OCI-LY7 (cell line): ENCODE measurements at regions of chr2 and their contacts with region 1.

Region 1: DNA sequence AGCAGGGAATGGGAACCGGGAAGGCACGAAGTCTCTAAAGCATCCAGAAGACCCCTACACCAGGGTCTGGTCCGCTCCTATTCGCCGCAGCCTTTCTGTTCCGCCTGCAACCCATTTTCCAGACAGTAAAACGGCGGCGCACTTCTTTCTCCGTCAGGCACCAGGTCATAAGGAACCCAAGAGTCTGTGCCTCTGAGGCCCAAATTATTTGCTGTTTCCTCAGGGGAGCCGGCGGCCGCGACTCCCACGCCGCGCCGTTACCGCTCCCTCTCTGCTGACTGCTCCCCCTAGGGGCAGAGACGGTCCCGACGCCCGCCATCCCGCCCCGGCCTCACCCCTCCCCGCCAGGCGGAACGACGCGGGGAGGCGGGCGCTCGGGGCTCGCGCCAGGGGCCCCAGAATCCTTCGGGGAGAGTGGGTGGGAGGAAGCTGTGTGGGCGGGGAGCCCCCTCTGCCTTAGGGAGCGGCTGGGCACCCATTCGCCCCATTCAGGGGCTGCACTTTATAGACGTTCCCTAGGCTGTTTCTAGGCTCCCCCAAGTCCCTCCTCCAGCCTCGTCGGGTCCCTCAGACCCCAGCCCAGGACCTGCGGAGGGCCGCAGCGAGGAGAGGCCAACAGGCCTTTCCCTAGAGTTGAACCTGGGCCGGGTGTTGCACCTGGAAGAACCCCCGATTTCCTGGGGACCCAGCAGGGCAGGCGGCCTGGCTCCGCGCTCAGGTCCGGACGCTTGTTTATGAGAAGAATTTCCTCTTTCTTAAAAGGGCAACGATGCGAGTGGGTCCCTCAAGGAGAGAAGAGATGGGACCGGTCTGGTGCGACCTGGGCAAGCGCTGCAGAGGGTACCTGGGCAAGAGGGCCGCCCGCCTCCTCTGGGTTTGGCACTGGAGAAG is 3.6 kb upstream of the CTDSP1 start:
- DNase-seq: peak; percentile 98
- H3K4me3 ChIP-seq: peak overlapping the region; percentile 88
- H3K27ac ChIP-seq: peak overlapping the region; percentile 87
- H3K4me1 ChIP-seq: peaks cover 46% of the 10 kb centered on the region
- CTCF ChIP-seq: peak; percentile 89

Region 2: DNA sequence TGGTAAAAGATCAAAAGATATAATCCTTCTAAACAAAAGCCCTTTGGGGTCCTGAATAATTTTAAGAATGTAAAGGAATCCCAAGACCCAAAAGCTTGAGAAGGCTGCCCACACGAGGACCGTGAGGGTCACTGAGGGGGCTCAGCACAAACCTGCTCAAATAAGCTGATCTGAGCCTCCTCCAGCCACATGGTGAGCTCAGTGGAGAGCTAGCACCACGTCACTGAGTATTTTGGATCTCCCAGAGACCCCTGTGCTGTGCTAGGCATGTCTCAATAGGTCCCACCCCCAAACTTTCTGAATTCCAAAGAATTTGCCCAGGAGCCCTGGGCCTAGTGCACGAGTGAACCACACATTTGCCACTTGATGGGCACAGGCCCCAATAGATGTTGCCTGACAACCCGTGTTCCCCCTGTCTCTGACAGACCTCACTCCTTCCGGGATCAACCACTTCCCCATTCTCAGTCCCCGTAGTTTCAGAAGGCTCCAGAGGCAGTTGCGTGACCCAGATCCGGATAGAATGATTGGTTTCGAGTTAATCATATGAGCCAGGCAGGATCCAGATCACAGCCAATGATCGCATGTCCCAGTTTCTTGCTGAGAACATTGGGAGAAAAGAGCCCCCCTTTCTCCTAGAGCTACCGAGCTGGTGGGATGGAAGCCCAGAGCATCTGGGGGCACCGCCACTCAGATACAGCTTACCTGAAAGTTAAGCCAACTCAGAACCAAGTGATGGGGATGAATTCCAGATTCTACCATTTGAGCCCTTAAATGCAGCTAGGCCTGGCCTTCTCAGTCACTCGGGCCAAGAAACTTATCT is 597.1 kb before region 1 on chr2:
- CTCF ChIA-PET with region 1: no interaction called
- POLR2A ChIA-PET with region 1: no interaction called
- intact Hi-C with region 1: no loop called
- DNase-seq: peak; percentile 34
- H3K4me3 ChIP-seq: no peak overlapping the region
- H3K27ac ChIP-seq: no peak overlapping the region
- H3K4me1 ChIP-seq: peaks cover 10% of the 10 kb centered on the region
- CTCF ChIP-seq: no peak

Region 3: GRCh38 chr2:218216674-218217359 is 179.2 kb before region 1 on chr2 and contains the start of gene ARPC2:
- CTCF ChIA-PET with region 1: no interaction called
- POLR2A ChIA-PET with region 1: no interaction called
- intact Hi-C with region 1: loop called (anchors 2 kb)
- DNase-seq: peak; percentile 97
- H3K4me3 ChIP-seq: peak within 1 kb of the TSS; percentile 90
- H3K27ac ChIP-seq: peak within 1 kb of the TSS; percentile 92
- H3K4me1 ChIP-seq: peaks cover 32% of the 10 kb centered on the region
- CTCF ChIP-seq: no peak
- total RNA-seq, gene ARPC2: 257 and 264 TPM in 2 replicates

Region 4: GRCh38 chr2:218292048-218293014 is 103.7 kb before region 1 on chr2 and contains the start of gene TMBIM1:
- CTCF ChIA-PET with region 1: interaction called, 4 read pairs
- POLR2A ChIA-PET with region 1: interaction called, 10 read pairs
- intact Hi-C with region 1: loop called (anchors 1 kb)
- DNase-seq: peak; percentile 86
- H3K4me3 ChIP-seq: peak within 1 kb of the TSS; percentile 89
- H3K27ac ChIP-seq: peak within 1 kb of the TSS; percentile 91
- H3K4me1 ChIP-seq: peaks cover 66% of the 10 kb centered on the region
- CTCF ChIP-seq: peak; percentile 93
- total RNA-seq, gene TMBIM1: 18.9 and 30.3 TPM in 2 replicates

Region 5: GRCh38 chr2:218332920-218333645 is 63.0 kb before region 1 on chr2:
- CTCF ChIA-PET with region 1: interaction called, 4 read pairs
- POLR2A ChIA-PET with region 1: interaction called, 3 read pairs
- intact Hi-C with region 1: loop called (anchors 1 kb)
- DNase-seq: peak; percentile 71
- H3K4me3 ChIP-seq: peak overlapping the region; percentile 59
- H3K27ac ChIP-seq: peak overlapping the region; percentile 100
- H3K4me1 ChIP-seq: peaks cover 85% of the 10 kb centered on the region
- CTCF ChIP-seq: no peak

Region 6: DNA sequence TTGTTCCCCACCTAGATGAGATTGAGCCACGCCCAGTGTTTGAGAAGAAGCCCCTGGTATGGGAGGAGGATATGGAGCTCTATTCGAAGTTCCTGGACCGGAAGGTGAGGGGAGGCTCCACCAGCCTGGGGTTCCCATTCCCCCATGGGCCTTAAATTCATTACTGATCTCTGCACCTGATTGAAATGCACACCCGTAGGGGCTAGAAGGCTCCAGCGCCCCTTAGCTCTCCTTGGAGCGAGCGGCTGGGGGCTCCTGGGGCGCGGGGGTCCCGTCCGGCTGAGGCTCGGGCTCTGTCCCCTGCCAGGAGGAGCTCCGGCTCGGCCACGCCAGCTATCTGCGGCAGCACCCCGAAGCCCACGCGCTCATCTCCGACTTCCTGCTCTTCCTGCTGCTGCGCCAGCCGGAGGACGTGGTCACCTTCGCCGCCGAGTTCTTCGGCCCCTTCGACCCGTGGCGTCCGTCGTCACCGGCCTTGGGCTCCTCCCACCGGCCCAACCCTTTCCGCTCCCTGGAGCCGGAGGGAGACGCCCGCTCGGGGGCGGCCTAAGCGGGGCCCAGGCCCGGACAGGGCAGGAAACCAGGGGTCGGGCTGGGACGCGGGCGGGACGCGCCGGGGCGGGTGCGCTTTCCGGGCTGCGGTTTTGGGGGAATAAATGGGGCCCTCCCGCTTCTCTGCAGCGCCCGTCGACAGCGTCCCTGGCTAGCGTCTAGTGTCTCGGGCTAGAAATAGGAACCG is 28.5 kb before region 1 on chr2:
- CTCF ChIA-PET with region 1: interaction called, 5 read pairs
- POLR2A ChIA-PET with region 1: interaction called, 4 read pairs
- intact Hi-C with region 1: loop called (anchors 1 kb)
- DNase-seq: peak; percentile 81
- H3K4me3 ChIP-seq: peak overlapping the region; percentile 68
- H3K27ac ChIP-seq: peak overlapping the region; percentile 40
- H3K4me1 ChIP-seq: peaks cover 66% of the 10 kb centered on the region
- CTCF ChIP-seq: peak; percentile 31; the same call in 1 of the 2 replicates

Region 7: DNA sequence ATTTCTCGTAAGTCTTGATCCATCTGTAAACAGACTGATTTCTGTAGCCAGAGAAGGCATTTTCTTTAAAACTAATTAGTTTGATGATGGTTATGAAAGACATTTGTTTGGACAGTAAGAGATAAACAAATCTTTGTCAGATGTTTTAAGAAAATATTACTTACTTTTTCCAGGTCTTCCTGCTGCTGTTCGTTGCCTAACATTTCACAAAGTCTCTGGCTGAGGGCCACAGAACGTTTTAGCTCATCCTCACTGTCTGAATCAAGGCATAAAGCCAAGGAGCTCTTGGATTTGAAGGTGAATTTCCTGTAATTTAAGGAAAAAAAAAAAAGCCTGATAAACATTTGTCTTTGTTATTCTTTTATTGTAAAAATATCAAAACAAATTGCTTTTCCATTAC is 80.6 kb after region 1 on chr2:
- CTCF ChIA-PET with region 1: no interaction called
- POLR2A ChIA-PET with region 1: no interaction called
- intact Hi-C with region 1: no loop called
- DNase-seq: no peak
- H3K4me3 ChIP-seq: no peak overlapping the region
- H3K27ac ChIP-seq: no peak overlapping the region
- H3K4me1 ChIP-seq: peaks cover 12% of the 10 kb centered on the region
- CTCF ChIP-seq: no peak

Region 8: DNA sequence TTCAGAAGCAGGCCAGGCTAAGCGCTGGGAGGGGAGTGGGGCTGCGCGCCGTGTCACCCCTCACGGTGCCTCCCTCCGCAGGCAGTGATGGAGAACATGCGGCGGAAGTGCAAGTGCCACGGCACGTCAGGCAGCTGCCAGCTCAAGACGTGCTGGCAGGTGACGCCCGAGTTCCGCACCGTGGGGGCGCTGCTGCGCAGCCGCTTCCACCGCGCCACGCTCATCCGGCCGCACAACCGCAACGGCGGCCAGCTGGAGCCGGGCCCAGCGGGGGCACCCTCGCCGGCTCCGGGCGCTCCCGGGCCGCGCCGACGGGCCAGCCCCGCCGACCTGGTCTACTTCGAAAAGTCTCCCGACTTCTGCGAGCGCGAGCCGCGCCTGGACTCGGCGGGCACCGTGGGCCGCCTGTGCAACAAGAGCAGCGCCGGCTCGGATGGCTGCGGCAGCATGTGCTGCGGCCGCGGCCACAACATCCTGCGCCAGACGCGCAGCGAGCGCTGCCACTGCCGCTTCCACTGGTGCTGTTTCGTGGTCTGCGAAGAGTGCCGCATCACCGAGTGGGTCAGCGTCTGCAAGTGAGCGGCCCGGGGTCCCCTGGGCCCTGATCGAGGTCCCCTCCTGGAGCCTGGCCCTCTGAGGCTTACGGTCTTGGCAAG is 496.8 kb after region 1 on chr2:
- CTCF ChIA-PET with region 1: interaction called, 7 read pairs
- POLR2A ChIA-PET with region 1: no interaction called
- intact Hi-C with region 1: loop called (anchors 5 kb)
- DNase-seq: peak; percentile 95
- H3K4me3 ChIP-seq: peak overlapping the region; percentile 69
- H3K27ac ChIP-seq: peak overlapping the region; percentile 70
- H3K4me1 ChIP-seq: peaks cover 62% of the 10 kb centered on the region
- CTCF ChIP-seq: peak; percentile 77